IMR-90 (cell line): ENCODE measurements at regions of chr17 and their contacts with region 1.

Region 1: GRCh38 chr17:19377602-19378392 is 501 bp upstream of the MAPK7 start:
- DNase-seq: peak; percentile 99
- ATAC-seq: peak; percentile 95
- H3K4me3 ChIP-seq: peak overlapping the region; percentile 66
- H3K27ac ChIP-seq: peak overlapping the region; percentile 90
- H3K4me1 ChIP-seq: peaks cover 12% of the 10 kb centered on the region; the same call in 1 of the 2 replicates
- H3K27me3 ChIP-seq: no peaks in the 10 kb centered on the region
- CTCF ChIP-seq: no peak
- POLR2A ChIP-seq: peak; percentile 91
- RAD21 ChIP-seq: no peak

Region 2: DNA sequence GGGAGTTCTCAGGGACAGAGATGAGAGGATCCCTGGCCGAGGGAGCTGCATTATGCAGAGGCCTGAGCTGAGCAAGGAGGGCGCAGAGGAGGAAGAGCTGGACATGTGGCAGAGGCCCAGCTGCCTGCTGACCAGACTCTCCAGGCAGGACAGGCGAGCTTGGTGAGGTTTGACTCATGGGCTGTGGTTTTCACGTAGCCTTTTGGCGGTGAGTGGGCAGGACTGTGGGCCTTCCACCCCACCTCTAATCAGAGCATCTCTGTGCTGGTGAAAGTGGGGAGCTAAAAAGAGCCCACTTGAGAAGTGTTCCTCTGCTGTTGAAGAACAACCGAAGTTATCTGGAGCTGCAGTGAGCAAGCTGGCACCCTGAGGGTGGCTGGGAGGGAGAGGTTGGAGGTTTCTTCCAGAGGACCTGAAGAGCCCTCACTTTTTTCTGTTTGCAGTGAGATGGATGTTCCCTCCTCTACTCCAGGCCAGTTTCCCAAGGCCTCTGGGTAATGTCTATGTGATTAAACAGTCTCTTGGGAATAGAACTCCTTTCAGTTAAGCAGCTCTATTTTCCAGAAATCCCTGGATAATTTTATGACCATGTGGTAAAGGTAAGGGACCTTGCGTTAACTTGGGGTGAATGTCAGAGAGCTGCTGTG is 128.7 kb before region 1 on chr17:
- CTCF ChIA-PET with region 1: no interaction called
- POLR2A ChIA-PET with region 1: interaction called, 10 read pairs
- dilution Hi-C with region 1: no loop called
- in situ Hi-C with region 1: no loop called
- intact Hi-C with region 1: no loop called
- DNase-seq: peak; percentile 94
- ATAC-seq: peak; percentile 97
- H3K4me3 ChIP-seq: no peak overlapping the region
- H3K27ac ChIP-seq: 0 out of 2 replicates have a peak overlapping the region, but pooled peaks have one; percentile 2
- H3K4me1 ChIP-seq: peaks cover 16% of the 10 kb centered on the region
- H3K27me3 ChIP-seq: no peaks in the 10 kb centered on the region
- CTCF ChIP-seq: no peak
- POLR2A ChIP-seq: no peak
- RAD21 ChIP-seq: peak; percentile 28

Region 3: DNA sequence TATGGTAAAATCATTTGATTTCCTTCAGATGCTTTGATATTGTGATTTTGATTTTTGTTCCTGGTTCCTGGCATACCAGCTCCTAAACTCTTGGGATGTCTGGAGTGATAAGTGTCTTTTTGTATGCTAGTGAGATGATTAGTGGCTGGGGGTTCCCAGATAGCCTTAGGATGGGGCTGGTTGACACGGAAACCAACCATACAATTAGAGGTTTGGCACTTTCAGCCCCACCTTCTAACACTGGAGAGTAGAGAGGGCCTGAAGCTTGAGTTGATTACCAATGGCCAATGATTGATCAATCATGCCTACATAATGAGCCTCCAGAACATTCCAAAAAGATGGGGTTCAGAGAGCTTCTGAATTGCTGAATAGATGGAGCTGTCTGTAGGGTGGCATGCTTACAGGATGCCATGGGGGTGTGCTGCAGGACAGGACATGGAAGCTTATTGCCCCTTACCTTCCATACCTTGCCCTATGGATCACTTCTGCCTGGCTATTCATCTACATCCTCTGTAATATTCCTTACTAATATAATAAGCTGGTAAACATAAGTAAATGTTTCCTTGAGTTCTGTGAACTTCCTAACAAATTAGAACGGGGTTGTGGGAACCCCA is 56.0 kb after region 1 on chr17:
- CTCF ChIA-PET with region 1: no interaction called
- POLR2A ChIA-PET with region 1: no interaction called
- dilution Hi-C with region 1: no loop called
- in situ Hi-C with region 1: no loop called
- intact Hi-C with region 1: no loop called
- DNase-seq: no peak
- ATAC-seq: no peak
- H3K4me3 ChIP-seq: no peak overlapping the region
- H3K27ac ChIP-seq: no peak overlapping the region
- H3K4me1 ChIP-seq: no peaks in the 10 kb centered on the region
- H3K27me3 ChIP-seq: peaks cover 2% of the 10 kb centered on the region
- CTCF ChIP-seq: no peak
- POLR2A ChIP-seq: no peak
- RAD21 ChIP-seq: no peak

Region 4: DNA sequence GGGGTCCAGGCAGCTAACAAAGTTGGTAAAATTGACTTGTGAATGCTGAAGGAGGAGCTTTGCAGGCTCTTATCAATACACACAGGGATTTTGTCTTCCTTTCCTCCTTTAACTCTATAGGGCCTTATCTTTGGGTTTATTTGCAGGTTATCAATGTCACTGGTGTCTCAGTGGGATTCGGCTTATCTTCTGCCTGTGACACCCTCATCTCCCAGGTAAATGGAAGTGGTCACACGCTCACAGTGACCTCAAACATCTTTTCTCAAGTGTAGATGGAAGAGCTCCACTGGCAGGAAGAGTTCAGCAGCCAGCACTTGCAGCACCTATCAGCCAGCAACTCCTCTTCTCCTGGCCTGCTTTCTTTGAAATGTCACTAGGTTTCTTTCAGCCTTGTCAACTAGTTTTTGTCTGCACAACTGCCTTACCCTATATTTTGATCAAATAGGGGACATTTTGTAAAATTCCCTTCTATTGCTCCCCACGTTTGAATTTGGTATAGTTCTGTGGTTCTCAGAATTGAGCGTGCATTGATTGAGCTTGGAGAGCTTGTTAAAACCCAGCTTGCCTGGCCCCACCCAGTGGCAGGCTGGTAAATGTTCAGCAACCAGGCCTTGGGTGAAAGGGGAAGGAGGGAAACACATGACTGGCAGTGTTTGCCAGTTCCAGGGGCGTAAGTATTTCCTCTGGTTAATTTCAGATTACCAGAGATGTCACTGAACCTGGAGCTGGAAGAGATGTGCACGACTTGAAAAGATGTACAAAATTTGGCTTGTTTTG is 168.7 kb after region 1 on chr17:
- CTCF ChIA-PET with region 1: no interaction called
- POLR2A ChIA-PET with region 1: no interaction called
- dilution Hi-C with region 1: no loop called
- in situ Hi-C with region 1: no loop called
- intact Hi-C with region 1: no loop called
- DNase-seq: no peak
- ATAC-seq: no peak
- H3K4me3 ChIP-seq: no peak overlapping the region
- H3K27ac ChIP-seq: no peak overlapping the region
- H3K4me1 ChIP-seq: no peaks in the 10 kb centered on the region
- H3K27me3 ChIP-seq: peaks cover 27% of the 10 kb centered on the region
- CTCF ChIP-seq: no peak
- POLR2A ChIP-seq: no peak
- RAD21 ChIP-seq: no peak